ENCODE measurements at regions of chr11 and their contacts with region 1.

Region 1: GRCh38 chr11:18265949-18266348 is at the start of gene SAA1:
- DNase-seq: no peak
- ATAC-seq: peak; percentile 15 to 72 (median 47)
- H3K4me3 ChIP-seq: no peak within 1 kb of the TSS
- H3K27ac ChIP-seq: no peak within 1 kb of the TSS
- H3K4me1 ChIP-seq: no peaks in the 10 kb centered on the region
- H3K27me3 ChIP-seq: peaks cover 0 to 4% (median 0%) of the 10 kb centered on the region in 3 donors
- CTCF ChIP-seq: no peak
- total RNA-seq, gene SAA1: 29.1 to 100 (median 36.2) TPM

Region 2: GRCh38 chr11:17544181-17544622 is 721.7 kb before region 1 on chr11 and contains the start of gene USH1C:
- intact Hi-C with region 1: loop called in 1 of 2 experiments (anchors 10 kb)
- DNase-seq: peak in 1 of 2 donors; percentile 35
- ATAC-seq: peak; percentile 78 to 90 (median 84)
- H3K4me3 ChIP-seq: peak within 1 kb of the TSS; percentile 32
- H3K27ac ChIP-seq: no peak within 1 kb of the TSS
- H3K4me1 ChIP-seq: no peaks in the 10 kb centered on the region
- H3K27me3 ChIP-seq: peaks cover 0 to 14% (median 2%) of the 10 kb centered on the region in 3 donors
- CTCF ChIP-seq: no peak
- total RNA-seq, gene USH1C: not detected